Endothelial cell of umbilical vein (primary cell): ENCODE measurements at regions of chr7 and their contacts with region 1.

Region 1: DNA sequence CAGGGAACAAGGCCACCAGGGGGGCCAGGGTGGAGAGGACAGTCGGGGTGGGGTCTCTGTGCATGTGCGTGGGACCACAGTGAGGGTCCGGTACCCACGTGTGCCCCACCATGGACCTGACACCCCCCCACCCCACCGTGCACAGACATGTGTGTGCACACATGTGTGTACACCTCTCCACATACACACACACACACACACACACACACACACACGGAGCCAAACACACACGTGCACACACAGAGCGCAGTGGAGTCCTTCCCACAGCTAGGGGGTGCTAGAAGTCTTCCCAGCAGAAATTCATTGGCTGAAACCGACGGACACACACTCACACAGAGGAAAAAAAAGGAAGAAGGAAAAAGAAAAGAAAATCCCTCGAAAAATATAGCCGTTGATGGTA is 42.8 kb upstream of the GNA12 start:
- DNase-seq: peak; percentile 62
- H3K4me3 ChIP-seq: no peak overlapping the region
- H3K27ac ChIP-seq: no peak overlapping the region
- H3K4me1 ChIP-seq: no peaks in the 10 kb centered on the region
- H3K27me3 ChIP-seq: no peaks in the 10 kb centered on the region
- CTCF ChIP-seq: peak; percentile 84 to 90
- POLR2A ChIP-seq: no peak

Region 2: DNA sequence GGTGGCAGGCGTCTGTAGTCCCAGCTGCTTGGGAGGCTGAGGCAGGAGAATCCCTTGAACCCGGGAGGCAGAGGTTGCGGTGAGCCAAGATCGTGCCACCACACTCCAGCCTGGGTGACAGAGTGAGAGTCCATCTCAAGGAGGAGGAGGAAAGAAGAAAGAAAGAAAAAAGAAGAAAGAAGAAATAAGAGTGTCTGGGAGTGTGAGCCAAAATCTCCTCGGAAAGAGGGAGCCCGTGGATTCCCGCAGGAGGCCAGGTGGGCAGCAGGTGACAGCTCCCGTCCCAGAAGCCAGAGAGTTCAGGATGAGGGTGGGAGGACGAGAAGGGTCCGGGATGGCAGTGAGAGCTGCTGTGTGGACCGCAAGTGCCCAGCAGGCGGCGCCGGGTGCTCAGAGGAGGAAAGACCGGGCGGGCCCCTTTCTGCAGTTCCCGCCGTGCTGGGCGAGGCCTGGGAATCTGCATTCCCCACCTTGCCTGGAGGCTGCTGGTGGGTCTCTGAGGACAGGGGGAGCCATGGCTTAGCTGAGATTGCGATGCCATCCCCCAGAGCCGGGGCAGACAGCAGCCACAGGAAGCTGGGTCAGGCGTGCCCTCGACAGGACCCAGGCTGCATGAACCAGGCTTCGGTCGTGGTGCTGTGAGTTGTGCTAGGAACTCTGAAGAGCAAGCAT is 216.0 kb before region 1 on chr7:
- CTCF ChIA-PET with region 1: no interaction called
- POLR2A ChIA-PET with region 1: no interaction called
- dilution Hi-C with region 1: no loop called
- intact Hi-C with region 1: no loop called
- DNase-seq: peak; percentile 35
- H3K4me3 ChIP-seq: no peak overlapping the region
- H3K27ac ChIP-seq: no peak overlapping the region
- H3K4me1 ChIP-seq: no peaks in the 10 kb centered on the region
- H3K27me3 ChIP-seq: peaks cover 0 to 3% of the 10 kb centered on the region in 2 experiments
- CTCF ChIP-seq: peak; percentile 84 to 95
- POLR2A ChIP-seq: no peak

Region 3: GRCh38 chr7:2851497-2851896 is 35.4 kb before region 1 on chr7:
- CTCF ChIA-PET with region 1: no interaction called
- POLR2A ChIA-PET with region 1: no interaction called
- dilution Hi-C with region 1: no loop called
- intact Hi-C with region 1: no loop called
- DNase-seq: no peak
- H3K4me3 ChIP-seq: no peak overlapping the region
- H3K27ac ChIP-seq: no peak overlapping the region
- H3K4me1 ChIP-seq: no peaks in the 10 kb centered on the region
- H3K27me3 ChIP-seq: no peaks in the 10 kb centered on the region
- CTCF ChIP-seq: no peak
- POLR2A ChIP-seq: no peak

Region 4: GRCh38 chr7:2870471-2870931 is 16.4 kb before region 1 on chr7:
- CTCF ChIA-PET with region 1: interaction called, 10 read pairs
- POLR2A ChIA-PET with region 1: no interaction called
- dilution Hi-C with region 1: no loop called
- intact Hi-C with region 1: loop called (anchors 2 kb)
- DNase-seq: peak; percentile 90
- H3K4me3 ChIP-seq: no peak overlapping the region
- H3K27ac ChIP-seq: peak overlapping the region; percentile 6
- H3K4me1 ChIP-seq: peaks cover 18% of the 10 kb centered on the region
- H3K27me3 ChIP-seq: no peaks in the 10 kb centered on the region
- CTCF ChIP-seq: no peak
- POLR2A ChIP-seq: peak; percentile 23

Region 5: GRCh38 chr7:3154912-3155494 is 268.1 kb after region 1 on chr7:
- CTCF ChIA-PET with region 1: interaction called, 15 read pairs
- POLR2A ChIA-PET with region 1: no interaction called
- dilution Hi-C with region 1: no loop called
- intact Hi-C with region 1: loop called (anchors 1 kb)
- DNase-seq: peak; percentile 64
- H3K4me3 ChIP-seq: no peak overlapping the region
- H3K27ac ChIP-seq: no peak overlapping the region
- H3K4me1 ChIP-seq: no peaks in the 10 kb centered on the region
- H3K27me3 ChIP-seq: peaks cover 0 to 15% of the 10 kb centered on the region in 2 experiments
- CTCF ChIP-seq: peak; percentile 52 to 55
- POLR2A ChIP-seq: no peak

Region 6: GRCh38 chr7:3200504-3200903 is 313.6 kb after region 1 on chr7:
- CTCF ChIA-PET with region 1: interaction called, 7 read pairs
- POLR2A ChIA-PET with region 1: no interaction called
- dilution Hi-C with region 1: no loop called
- intact Hi-C with region 1: loop called (anchors 1 kb)
- DNase-seq: peak; percentile 36
- H3K4me3 ChIP-seq: no peak overlapping the region
- H3K27ac ChIP-seq: no peak overlapping the region
- H3K4me1 ChIP-seq: no peaks in the 10 kb centered on the region
- H3K27me3 ChIP-seq: no peaks in the 10 kb centered on the region
- CTCF ChIP-seq: peak; percentile 47 to 51
- POLR2A ChIP-seq: no peak

Region 7: DNA sequence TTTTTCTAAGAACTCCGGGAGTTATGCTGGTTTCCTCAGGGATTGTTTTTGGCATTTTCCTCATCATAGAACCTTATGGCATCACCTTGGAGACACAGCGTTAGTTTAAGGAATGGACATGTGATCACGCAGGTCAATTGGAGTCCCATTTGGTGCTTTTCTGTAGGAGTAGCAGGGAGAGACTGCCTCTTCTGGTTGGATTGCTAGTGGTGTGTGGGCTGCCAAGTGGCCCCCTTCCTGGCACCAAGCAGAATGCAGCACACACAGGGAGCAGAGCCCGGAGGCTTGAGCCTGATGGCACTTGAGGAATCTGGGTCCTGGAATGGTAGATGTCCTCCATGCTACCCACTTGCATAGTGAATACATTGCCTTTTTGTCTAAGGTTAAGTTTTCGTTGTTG is 472.1 kb after region 1 on chr7:
- CTCF ChIA-PET with region 1: no interaction called
- POLR2A ChIA-PET with region 1: no interaction called
- dilution Hi-C with region 1: no loop called
- intact Hi-C with region 1: no loop called
- DNase-seq: no peak
- H3K4me3 ChIP-seq: no peak overlapping the region
- H3K27ac ChIP-seq: no peak overlapping the region
- H3K4me1 ChIP-seq: no peaks in the 10 kb centered on the region
- H3K27me3 ChIP-seq: no peaks in the 10 kb centered on the region
- CTCF ChIP-seq: no peak
- POLR2A ChIP-seq: no peak

Region 8: DNA sequence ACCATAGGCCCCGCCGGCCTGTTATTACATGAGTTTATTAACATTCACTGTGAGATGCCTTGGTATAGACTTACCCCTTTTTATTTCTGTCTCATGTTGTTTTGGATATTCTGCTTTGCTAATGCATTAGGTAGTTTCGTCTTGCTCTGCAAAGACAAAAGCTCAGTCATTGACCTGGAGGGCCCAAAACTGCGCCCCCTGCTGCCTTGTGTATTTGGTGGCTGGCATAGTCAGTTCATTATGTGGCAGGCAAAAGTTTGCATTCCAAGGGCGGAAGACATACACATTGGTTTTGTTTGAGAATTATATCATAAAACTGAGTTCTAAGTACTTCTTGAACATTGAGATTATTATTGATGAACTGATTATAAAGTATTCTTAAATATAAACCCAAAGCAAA is 786.6 kb after region 1 on chr7:
- CTCF ChIA-PET with region 1: interaction called, 11 read pairs
- POLR2A ChIA-PET with region 1: no interaction called
- dilution Hi-C with region 1: no loop called
- intact Hi-C with region 1: no loop called
- DNase-seq: peak; percentile 25
- H3K4me3 ChIP-seq: no peak overlapping the region
- H3K27ac ChIP-seq: no peak overlapping the region
- H3K4me1 ChIP-seq: no peaks in the 10 kb centered on the region
- H3K27me3 ChIP-seq: no peaks in the 10 kb centered on the region
- CTCF ChIP-seq: peak; percentile 37 to 54
- POLR2A ChIP-seq: no peak

Region 9: DNA sequence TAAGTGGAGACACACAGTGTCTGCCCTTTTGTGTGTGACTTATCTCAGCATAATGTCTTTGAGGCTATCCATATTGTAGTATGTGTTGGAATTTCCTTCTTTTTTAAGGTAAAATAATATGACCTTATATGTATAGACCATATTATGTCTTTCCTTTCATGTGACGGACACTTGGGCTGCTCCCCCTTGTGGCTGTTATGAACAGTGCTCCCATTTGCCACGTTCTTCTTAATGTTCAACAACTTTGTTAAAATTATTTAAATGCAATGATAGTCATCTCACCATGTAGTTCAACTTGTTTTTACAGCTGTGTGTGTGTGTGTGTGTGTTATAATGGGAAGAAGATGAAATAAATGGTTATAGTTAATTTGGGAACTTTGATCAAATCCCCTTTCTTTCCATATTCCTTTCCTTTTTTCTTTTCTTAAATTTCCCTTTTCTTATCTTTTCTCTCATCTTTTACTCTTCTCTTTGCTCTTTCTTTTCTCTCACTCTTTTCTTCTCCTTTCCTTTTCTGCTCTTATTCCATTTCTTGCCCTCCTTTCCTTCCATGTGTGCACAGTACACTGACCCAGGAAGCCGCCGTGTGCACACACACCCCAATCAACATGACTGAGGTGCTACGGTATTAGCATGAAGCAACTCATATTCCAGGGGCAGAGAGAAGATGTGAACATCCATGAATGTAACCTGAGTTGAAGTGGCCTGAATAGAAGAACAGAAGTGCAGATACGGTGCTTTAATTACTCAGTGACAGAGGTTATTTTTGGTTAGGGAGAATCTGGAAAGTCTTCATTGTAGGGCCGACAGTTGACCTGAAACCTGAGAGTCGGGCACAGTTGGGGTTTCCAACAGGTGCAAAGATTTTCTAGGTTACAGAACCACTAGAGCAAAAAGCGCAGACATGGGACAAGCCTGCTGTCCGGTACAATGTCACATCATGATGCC is 1010.8 kb after region 1 on chr7:
- CTCF ChIA-PET with region 1: no interaction called
- POLR2A ChIA-PET with region 1: no interaction called
- dilution Hi-C with region 1: no loop called
- intact Hi-C with region 1: loop called (anchors 1 kb)
- DNase-seq: peak; percentile 55
- H3K4me3 ChIP-seq: no peak overlapping the region
- H3K27ac ChIP-seq: no peak overlapping the region
- H3K4me1 ChIP-seq: no peaks in the 10 kb centered on the region
- H3K27me3 ChIP-seq: no peaks in the 10 kb centered on the region
- CTCF ChIP-seq: peak; percentile 49 to 69
- POLR2A ChIP-seq: no peak